ENCODE measurements at regions of chr14 and their contacts with region 1.

Region 1: DNA sequence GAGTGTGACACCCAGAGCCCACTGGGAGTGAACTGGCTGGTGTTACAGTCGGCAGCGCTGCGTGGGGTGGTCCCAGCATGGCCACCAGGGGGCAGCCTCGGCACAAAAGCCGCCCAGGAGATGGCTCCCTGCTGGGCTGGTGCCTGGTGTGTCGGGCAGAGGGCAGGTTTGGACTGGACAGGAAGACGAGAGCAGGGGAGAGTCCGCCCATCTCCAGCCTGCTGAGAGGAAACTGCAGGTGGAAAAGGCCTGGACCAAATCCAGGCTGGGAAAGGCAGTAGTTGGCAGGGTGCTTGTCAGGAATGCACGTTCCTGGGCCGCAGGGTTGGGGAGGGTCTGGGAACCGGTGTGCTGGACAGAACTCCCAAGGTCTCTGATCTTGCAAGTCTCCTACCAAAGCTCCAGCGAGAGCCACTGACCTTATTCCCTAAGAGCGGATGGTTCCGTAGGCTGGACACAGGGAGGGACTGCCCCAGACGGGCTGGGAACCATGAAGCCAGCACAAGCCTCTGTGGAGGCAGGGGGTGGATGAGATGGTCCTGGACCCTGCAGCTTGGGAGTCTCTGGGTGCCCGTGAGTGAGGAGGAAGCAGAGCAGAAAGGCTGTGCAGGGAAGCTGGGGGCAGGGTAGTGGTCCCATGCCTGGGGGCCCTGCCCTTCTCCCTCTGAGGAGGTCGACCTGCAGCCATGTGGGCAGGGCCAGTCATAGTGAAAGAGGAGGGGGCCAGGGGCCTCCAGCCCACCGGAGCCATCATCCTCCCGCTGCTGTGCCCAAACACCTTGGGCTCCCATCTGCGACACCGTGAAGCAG is 1.8 kb downstream of the AHNAK2 start:
- DNase-seq: peak; percentile 87
- ATAC-seq: peak; percentile 85
- H3K4me3 Mint-ChIP-seq: no peak overlapping the region
- H3K27ac Mint-ChIP-seq: no peak overlapping the region
- H3K4me1 Mint-ChIP-seq: peaks cover 11% of the 10 kb centered on the region
- H3K27me3 Mint-ChIP-seq: peaks cover 26% of the 10 kb centered on the region
- CTCF ChIP-seq: peak; percentile 98

Region 2: GRCh38 chr14:105059035-105059924 is 82.9 kb after region 1 on chr14:
- CTCF ChIA-PET with region 1: interaction called, 16 read pairs
- POLR2A ChIA-PET with region 1: no interaction called
- intact Hi-C with region 1: no loop called
- DNase-seq: peak; percentile 90
- ATAC-seq: peak; percentile 65
- H3K4me3 Mint-ChIP-seq: peak overlapping the region; percentile 86
- H3K27ac Mint-ChIP-seq: peak overlapping the region; percentile 96
- H3K4me1 Mint-ChIP-seq: peaks cover 50% of the 10 kb centered on the region
- H3K27me3 Mint-ChIP-seq: no peaks in the 10 kb centered on the region
- CTCF ChIP-seq: peak; percentile 34